ENCODE measurements at regions of chr10 and their contacts with region 1.

Region 1: DNA sequence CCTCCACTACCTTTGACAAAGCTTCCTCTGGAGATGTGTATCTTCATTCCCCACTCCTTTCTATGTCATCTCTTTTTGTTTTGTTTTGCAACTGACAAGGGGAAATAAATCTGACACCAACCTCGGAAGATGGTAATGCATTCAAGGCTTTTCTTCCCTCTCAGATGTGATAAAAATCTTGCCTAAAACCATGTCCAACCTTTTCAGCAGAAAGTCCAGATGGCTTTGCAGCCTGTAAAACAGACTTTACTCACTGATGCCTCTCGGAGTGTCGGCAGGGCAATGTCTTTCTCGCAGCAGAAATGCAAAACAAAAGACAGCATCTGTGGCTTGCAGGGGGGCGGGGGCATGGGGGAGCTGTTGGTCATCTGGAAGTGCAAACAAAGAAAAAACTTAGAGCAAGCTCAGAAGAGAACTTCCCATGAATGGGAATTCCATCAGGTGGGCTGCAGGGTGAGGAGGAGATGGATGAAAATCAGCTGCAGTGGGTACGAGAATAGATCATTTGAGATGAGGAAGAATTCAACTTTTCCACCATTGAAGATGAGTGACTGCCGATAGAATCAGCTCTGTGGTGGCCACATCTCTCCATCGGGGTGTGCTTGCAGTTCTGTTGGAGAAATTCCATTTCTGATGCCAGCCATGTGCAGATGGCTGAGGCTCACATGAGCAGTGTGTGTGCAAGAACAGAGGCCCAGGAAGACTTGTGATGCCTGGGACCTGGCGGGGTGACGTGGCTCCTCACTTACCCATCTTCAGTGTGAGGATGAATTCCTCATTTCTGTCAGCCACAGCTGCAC is 237.7 kb downstream of the WDR37 start:
- DNase-seq: no peak
- H3K4me3 ChIP-seq: no peak overlapping the region
- H3K4me3 Mint-ChIP-seq: no peak overlapping the region
- H3K27ac Mint-ChIP-seq: no peak overlapping the region
- H3K4me1 ChIP-seq: no peaks in the 10 kb centered on the region
- H3K4me1 Mint-ChIP-seq: no peaks in the 10 kb centered on the region
- H3K27me3 ChIP-seq: no peaks in the 10 kb centered on the region; the same call in none of the 2 replicates
- H3K27me3 Mint-ChIP-seq: peaks cover 20% of the 10 kb centered on the region
- CTCF ChIP-seq: no peak

Region 2: DNA sequence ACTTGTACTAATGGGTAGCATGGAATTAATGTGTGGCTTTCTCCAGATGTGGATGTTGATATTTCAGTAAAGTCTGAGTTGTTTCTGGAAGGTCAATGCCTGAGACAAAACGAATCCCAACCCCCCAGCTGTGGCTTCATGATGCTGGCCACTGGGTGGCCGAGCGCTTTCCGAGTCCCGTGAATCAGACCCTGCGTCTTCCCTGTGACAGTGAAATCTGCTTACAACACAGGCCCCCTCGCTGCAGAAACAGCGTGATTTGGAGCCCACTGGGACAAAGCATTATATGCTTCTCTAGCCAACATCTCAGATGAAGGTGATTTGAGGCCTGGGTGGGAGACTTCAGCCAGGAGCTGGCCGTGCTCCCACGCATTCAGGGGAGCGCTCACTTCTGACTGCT is 113.0 kb before region 1 on chr10:
- CTCF ChIA-PET with region 1: no interaction called
- POLR2A ChIA-PET with region 1: no interaction called
- intact Hi-C with region 1: loop called (anchors 5 kb)
- DNase-seq: peak; percentile 52 to 55
- H3K4me3 ChIP-seq: no peak overlapping the region
- H3K4me3 Mint-ChIP-seq: no peak overlapping the region
- H3K27ac Mint-ChIP-seq: peak overlapping the region; percentile 6
- H3K4me1 ChIP-seq: no peaks in the 10 kb centered on the region
- H3K4me1 Mint-ChIP-seq: no peaks in the 10 kb centered on the region
- H3K27me3 ChIP-seq: no peaks in the 10 kb centered on the region
- H3K27me3 Mint-ChIP-seq: no peaks in the 10 kb centered on the region
- CTCF ChIP-seq: peak; percentile 56 to 83

Region 3: DNA sequence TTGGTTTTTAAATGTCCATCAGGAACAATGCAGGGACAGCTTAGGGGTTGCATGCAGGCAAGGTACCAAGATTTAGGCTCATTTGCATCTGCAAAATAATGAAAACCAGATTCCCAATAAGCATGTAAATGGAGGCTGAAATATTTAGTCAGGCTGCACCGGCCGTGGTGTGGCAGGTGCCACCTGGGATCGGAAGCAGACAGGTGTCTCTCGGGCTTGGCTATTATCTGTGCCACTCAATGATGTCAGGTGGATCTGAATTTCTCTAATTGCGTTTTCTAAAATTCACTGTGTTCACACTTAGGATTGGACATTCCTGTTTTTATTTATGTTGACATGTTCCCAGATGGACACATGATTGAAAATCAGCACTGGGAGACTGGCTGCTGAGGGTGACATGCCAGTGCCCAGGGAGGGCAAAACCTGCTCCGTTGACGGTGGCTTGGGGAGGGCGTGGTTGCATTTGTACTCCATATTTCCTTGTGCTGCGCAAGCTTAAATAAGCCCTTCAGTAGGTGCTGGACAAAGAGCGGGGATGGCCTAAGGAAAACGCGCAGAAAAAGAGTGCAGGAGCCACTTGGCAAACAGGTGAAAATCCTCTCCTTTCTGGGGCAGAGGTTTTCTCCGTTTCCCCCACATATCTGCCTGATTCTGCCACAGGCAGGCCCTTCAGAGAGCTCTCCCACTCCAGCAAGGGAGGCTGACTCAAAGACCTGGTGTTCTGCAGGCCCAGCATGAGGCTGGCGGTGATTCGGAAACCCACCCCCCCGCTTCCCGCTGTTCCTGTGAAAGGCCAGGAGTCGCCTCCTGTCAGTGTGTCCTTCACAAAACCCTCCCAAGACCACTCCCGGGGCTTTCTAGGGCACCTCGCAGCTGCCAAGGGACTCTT is 95.1 kb before region 1 on chr10:
- CTCF ChIA-PET with region 1: no interaction called
- POLR2A ChIA-PET with region 1: no interaction called
- intact Hi-C with region 1: no loop called
- DNase-seq: peak in 1 of 2 experiments; percentile 31
- H3K4me3 ChIP-seq: no peak overlapping the region
- H3K4me3 Mint-ChIP-seq: no peak overlapping the region
- H3K27ac Mint-ChIP-seq: no peak overlapping the region
- H3K4me1 ChIP-seq: peaks cover 26% of the 10 kb centered on the region
- H3K4me1 Mint-ChIP-seq: peaks cover 36% of the 10 kb centered on the region
- H3K27me3 ChIP-seq: no peaks in the 10 kb centered on the region
- H3K27me3 Mint-ChIP-seq: no peaks in the 10 kb centered on the region
- CTCF ChIP-seq: no peak

Measured in Caco-2 (cell line).